A549 (cell line): ENCODE measurements at regions of chr2 and their contacts with region 1.

Region 1: DNA sequence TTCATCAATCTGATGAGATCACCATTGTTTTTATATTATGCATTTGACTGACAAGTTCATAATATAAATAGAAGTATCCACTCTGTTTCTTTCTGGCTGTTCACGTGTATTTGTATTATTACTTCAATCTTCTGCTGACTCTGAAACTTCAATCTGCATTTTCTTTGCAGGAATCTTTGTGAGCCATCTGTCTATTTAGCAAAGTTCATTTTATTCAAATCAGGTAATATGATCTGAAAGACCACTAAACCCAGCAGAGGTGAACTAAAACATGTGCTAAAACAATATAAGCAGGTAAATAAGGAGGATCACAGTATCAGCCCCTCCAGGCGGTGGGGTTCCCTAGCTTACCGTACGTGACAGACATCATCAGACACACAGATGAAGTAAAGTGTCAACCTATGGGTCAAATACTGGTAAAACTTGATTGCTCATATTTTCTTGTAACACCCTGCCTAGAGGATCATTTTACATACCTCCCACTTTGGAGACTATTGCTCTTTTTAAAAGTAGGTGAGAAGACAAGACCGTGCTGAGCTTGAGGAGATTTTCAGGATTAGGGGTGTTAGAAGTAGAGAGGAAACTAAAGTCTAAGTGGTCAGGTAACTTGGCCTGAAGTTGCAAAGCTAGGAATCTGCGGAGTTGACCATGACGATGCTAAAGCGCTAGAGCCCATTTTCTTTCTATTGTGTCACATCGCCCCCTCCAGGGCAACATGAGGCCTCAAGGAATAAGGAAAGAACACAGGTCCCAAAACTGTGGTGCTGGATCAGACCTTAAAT is 9.0 kb downstream of the DTNB start:
- DNase-seq: peak; percentile 83 to 91
- ATAC-seq: peak; percentile 99 to 100
- H3K4me3 ChIP-seq: no peak overlapping the region
- H3K27ac ChIP-seq: peak overlapping the region; percentile 8 to 69; a peak in 4 of 6 replicates
- H3K4me1 ChIP-seq: peaks cover 13% of the 10 kb centered on the region
- CTCF ChIP-seq: peak; percentile 96
- EP300 ChIP-seq: no peak
- POLR2A ChIP-seq: no peak
- RAD21 ChIP-seq: peak; percentile 96 to 99

Region 2: DNA sequence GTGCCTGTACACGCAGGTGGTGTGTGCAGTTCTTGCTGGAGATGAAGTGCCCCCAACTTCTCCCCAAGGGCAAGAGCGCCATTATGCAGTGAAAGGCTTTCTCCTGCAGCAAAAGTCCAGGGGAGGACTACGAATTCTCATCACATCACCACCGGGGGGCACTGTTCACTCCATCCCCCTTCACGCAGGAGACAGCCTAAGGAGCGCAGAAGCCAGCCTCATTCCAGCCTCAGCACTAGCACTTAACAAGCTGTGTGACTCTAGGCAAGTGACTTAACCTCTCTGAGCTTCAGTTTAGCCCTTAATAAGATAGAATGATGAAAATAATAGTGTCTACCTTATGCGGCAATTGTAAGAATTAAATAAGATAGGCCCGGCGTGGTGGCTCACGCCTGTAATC is 355.0 kb before region 1 on chr2:
- CTCF ChIA-PET with region 1: interaction called, 16 read pairs
- POLR2A ChIA-PET with region 1: no interaction called
- DNase-seq: peak; percentile 73 to 78
- ATAC-seq: peak; percentile 65 to 88; a peak in 5 of 6 replicates
- H3K4me3 ChIP-seq: no peak overlapping the region
- H3K27ac ChIP-seq: no peak overlapping the region
- H3K4me1 ChIP-seq: no peaks in the 10 kb centered on the region
- CTCF ChIP-seq: peak; percentile 65
- EP300 ChIP-seq: no peak
- POLR2A ChIP-seq: no peak
- RAD21 ChIP-seq: peak; percentile 56 to 69

Region 3: GRCh38 chr2:25558262-25558661 is 106.1 kb before region 1 on chr2:
- CTCF ChIA-PET with region 1: interaction called, 14 read pairs
- POLR2A ChIA-PET with region 1: no interaction called
- DNase-seq: no peak
- ATAC-seq: no peak
- H3K4me3 ChIP-seq: no peak overlapping the region
- H3K27ac ChIP-seq: no peak overlapping the region
- H3K4me1 ChIP-seq: no peaks in the 10 kb centered on the region
- CTCF ChIP-seq: no peak
- EP300 ChIP-seq: no peak
- POLR2A ChIP-seq: no peak
- RAD21 ChIP-seq: no peak

Region 4: DNA sequence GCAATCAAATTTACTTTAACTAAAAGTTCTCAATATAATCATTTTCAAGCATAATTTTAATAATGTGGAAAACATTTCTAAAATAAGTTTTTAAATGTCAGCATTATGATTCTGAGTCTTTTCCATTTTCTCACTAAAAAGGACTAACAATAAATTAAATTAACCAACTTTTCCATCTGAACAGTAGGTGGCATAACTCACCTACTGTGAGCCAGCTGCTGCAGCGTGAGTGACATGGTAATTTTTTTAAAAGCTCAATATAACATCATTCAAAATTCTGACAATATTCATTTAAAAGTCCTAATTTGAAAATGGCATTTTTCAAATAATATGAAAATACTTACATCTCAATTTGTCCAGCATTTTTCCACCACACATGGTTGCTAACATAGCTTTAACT is 57.5 kb before region 1 on chr2:
- CTCF ChIA-PET with region 1: interaction called, 414 read pairs
- POLR2A ChIA-PET with region 1: interaction called, 5 read pairs
- DNase-seq: peak; percentile 27 to 60
- ATAC-seq: peak; percentile 68 to 78; a peak in 5 of 6 replicates
- H3K4me3 ChIP-seq: no peak overlapping the region
- H3K27ac ChIP-seq: no peak overlapping the region
- H3K4me1 ChIP-seq: peaks cover 12% of the 10 kb centered on the region
- CTCF ChIP-seq: peak; percentile 98
- EP300 ChIP-seq: no peak
- POLR2A ChIP-seq: no peak
- RAD21 ChIP-seq: peak; percentile 97 to 98

Region 5: DNA sequence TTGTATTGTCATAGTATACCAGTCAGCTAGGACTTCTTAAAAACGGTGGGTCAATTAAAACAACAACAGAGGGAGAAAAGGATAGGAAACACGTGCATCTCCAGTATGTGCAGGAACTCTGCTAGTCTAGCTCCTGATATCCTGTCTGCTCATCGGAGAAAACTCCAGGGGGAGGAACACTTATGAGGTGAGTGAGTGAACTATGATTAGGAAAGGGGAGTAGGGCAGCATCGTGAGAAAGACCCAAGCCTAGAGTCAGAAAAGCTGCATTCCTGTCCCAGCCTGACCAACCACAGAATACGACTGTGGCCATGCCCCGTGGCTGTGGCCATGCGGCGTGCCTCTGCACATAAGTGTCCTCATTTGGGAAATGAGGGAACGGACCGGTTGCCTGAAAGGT is 25.2 kb before region 1 on chr2:
- CTCF ChIA-PET with region 1: interaction called, 43 read pairs
- POLR2A ChIA-PET with region 1: no interaction called
- DNase-seq: no peak
- ATAC-seq: no peak; a peak in 2 of 6 replicates
- H3K4me3 ChIP-seq: no peak overlapping the region
- H3K27ac ChIP-seq: no peak overlapping the region
- H3K4me1 ChIP-seq: no peaks in the 10 kb centered on the region
- CTCF ChIP-seq: no peak
- EP300 ChIP-seq: no peak
- POLR2A ChIP-seq: no peak
- RAD21 ChIP-seq: no peak

Region 6: GRCh38 chr2:25684577-25685473 is 20.5 kb after region 1 on chr2:
- CTCF ChIA-PET with region 1: interaction called, 22 read pairs
- POLR2A ChIA-PET with region 1: no interaction called
- DNase-seq: no peak
- ATAC-seq: peak in 1 of 2 experiments; percentile 23; a peak in 1 of 6 replicates
- H3K4me3 ChIP-seq: no peak overlapping the region
- H3K27ac ChIP-seq: no peak overlapping the region
- H3K4me1 ChIP-seq: no peaks in the 10 kb centered on the region
- CTCF ChIP-seq: no peak
- EP300 ChIP-seq: no peak
- POLR2A ChIP-seq: no peak
- RAD21 ChIP-seq: no peak

Region 7: DNA sequence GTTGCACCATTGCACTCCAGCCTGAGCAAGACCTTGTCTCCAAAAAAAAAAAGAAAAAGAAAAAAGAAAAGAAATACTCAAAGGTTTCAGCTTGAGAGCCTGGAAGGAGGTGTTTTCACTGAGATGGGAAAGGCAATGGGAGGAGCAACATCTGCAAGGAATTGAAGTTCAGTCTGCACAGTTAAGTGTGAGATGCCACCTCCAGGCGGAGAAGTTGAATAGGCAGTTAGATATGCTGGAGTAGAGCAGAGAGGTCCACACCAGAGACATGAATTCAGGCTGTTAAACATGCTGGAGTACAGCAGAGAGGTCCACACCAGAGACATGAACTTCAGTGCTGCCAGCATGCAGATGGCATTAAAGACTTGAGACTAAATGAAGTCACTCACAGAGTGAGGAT is 50.4 kb after region 1 on chr2:
- CTCF ChIA-PET with region 1: interaction called, 20 read pairs
- POLR2A ChIA-PET with region 1: no interaction called
- DNase-seq: peak; percentile 31 to 66
- ATAC-seq: peak; percentile 86 to 88
- H3K4me3 ChIP-seq: no peak overlapping the region
- H3K27ac ChIP-seq: no peak overlapping the region
- H3K4me1 ChIP-seq: peaks cover 6% of the 10 kb centered on the region; the same call in 2 of the 3 replicates
- CTCF ChIP-seq: peak; percentile 21; the same call in 1 of the 3 replicates
- EP300 ChIP-seq: no peak
- POLR2A ChIP-seq: no peak
- RAD21 ChIP-seq: peak; percentile 25 to 58; a peak in 2 of 5 replicates

Region 8: GRCh38 chr2:25794544-25795276 is 130.3 kb after region 1 on chr2:
- CTCF ChIA-PET with region 1: no interaction called
- POLR2A ChIA-PET with region 1: no interaction called
- DNase-seq: no peak
- ATAC-seq: no peak
- H3K4me3 ChIP-seq: no peak overlapping the region
- H3K27ac ChIP-seq: no peak overlapping the region
- H3K4me1 ChIP-seq: peaks cover 9% of the 10 kb centered on the region
- CTCF ChIP-seq: no peak
- EP300 ChIP-seq: no peak
- POLR2A ChIP-seq: no peak
- RAD21 ChIP-seq: no peak